CD4-positive, alpha-beta memory T cell (primary cell): ENCODE measurements at regions of chr3 and their contacts with region 1.

Region 1: DNA sequence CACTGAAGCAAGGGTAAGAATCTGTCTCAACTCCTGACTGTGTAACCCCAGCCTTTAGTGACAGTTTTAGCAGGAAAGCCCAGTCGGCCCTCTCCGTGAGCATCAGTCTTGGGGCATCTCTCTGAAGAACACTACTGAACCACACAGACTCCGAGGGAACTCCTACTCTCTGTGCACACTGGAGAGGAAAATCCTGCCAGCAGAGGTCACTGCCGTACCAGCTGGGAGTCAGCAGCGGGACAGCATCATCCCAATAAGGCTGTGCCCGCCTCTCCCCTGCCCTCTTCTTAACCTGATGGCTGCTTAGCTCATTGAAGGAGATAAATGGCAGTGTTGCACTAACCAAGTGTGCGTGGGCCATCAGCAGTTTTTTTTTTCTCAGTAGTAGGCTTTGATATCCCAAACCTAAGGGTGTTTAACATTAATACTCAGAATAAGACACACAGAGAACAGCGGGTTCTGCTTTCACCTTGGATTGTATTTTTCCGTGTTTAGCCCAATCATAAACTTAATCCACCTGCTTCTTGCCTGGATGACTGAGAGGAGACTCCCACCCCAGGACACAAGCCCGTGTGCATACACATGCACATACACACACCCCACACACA is 26.6 kb upstream of the RASA2 start:
- DNase-seq: peak; percentile 80 to 87 (median 82)
- H3K4me3 ChIP-seq: no peak overlapping the region
- H3K4me3 Mint-ChIP-seq: no peak overlapping the region
- H3K27ac ChIP-seq: no peak overlapping the region
- H3K27ac Mint-ChIP-seq: peak overlapping the region in 2 of 7 donors; percentile 6 to 18
- H3K4me1 ChIP-seq: peaks cover under 1% of the 10 kb centered on the region
- H3K4me1 Mint-ChIP-seq: peaks cover under 1 to 13% (median 6%) of the 10 kb centered on the region in 4 donors
- H3K27me3 ChIP-seq: no peaks in the 10 kb centered on the region
- H3K27me3 Mint-ChIP-seq: no peaks in the 10 kb centered on the region

Region 2: DNA sequence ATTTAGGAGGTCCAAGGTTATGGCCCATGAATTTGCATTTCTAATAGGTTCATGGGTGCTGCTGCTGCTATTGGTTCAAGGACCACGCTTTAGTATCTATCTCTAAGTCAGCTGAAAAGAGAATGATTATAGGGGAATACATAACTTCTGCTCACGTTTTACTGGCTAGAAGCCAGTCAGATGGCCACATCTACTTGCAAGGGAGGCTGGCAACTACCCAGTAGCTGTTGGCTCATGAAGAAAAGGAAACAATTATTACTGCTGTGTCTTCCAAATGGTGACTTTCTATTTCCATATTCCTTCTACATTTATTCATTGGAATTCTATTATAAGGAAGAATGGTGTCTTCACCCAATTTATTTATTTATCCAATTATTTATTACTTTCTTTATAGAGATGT is 464.3 kb before region 1 on chr3:
- CTCF ChIA-PET with region 1: no interaction called
- POLR2A ChIA-PET with region 1: no interaction called
- intact Hi-C with region 1: no loop called
- DNase-seq: no peak
- H3K4me3 ChIP-seq: no peak overlapping the region
- H3K4me3 Mint-ChIP-seq: no peak overlapping the region
- H3K27ac ChIP-seq: no peak overlapping the region
- H3K27ac Mint-ChIP-seq: no peak overlapping the region
- H3K4me1 ChIP-seq: no peaks in the 10 kb centered on the region
- H3K4me1 Mint-ChIP-seq: peaks cover 0 to 2% (median 0%) of the 10 kb centered on the region in 4 donors
- H3K27me3 ChIP-seq: no peaks in the 10 kb centered on the region
- H3K27me3 Mint-ChIP-seq: peaks cover 4 to 12% of the 10 kb centered on the region in 2 donors

Region 3: DNA sequence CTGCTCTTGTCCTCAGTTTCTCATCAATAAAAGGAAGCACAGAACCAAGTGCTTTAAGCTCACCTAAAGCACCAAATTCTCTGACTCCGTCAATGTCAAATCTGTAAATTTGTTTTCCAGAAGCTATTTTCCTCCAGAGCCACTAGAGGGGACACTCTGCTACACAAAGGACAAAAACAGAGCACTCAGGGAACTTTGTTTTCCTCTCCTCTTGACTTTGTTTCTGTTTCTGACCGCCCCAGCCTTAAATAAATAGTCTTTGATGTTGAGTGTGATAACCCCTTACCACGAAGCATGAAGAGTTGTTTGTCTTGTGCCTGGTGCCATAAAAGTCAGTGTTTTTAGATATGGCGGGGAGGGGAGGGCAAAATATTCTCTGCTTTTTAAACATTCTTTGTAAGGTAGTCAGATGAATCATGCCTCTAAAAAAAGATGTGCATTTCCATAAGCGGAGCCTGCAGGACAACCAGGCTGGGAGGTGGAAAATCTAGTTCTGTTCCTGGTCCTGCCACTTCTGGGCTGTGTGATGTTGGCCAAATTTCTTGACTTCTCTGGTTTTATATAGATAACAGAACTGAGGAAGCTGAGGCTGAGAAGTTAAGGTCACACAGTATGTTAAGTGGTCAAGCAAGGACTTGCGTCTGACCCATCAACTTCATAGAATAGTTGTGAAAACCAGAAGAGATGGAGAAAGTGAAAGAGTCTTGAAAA is 99.2 kb before region 1 on chr3:
- CTCF ChIA-PET with region 1: interaction called, 147 read pairs
- POLR2A ChIA-PET with region 1: no interaction called
- intact Hi-C with region 1: no loop called
- DNase-seq: peak in 4 of 5 donors; percentile 46 to 60 (median 50)
- H3K4me3 ChIP-seq: no peak overlapping the region
- H3K4me3 Mint-ChIP-seq: peak overlapping the region in 6 of 8 donors; percentile 11 to 69 (median 50)
- H3K27ac ChIP-seq: no peak overlapping the region
- H3K27ac Mint-ChIP-seq: peak overlapping the region in 2 of 7 donors; percentile 7 to 39
- H3K4me1 ChIP-seq: peaks cover 10% of the 10 kb centered on the region
- H3K4me1 Mint-ChIP-seq: peaks cover 3 to 8% (median 7%) of the 10 kb centered on the region in 4 donors
- H3K27me3 ChIP-seq: no peaks in the 10 kb centered on the region
- H3K27me3 Mint-ChIP-seq: peaks cover 2 to 5% of the 10 kb centered on the region in 2 donors

Region 4: DNA sequence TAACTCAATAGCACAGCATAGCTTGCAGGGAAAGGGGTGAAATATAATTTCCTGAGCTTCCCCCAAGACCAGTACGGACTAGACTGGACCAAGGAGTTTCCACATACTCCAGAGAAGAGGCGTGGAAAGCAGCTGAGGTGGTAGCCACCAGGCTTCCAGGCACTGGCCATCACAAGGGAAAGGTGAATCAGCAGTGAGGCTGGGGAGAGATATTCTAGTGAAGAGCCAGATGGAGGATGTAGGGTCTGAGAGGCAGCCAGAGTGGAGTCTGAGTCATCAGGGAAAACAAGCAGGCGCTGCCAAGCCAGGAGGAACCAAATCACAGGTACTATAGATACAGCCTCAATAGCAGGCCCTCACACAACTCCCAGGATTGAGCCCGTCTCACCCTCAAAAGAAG is 17.0 kb after region 1 on chr3:
- CTCF ChIA-PET with region 1: interaction called, 49 read pairs
- POLR2A ChIA-PET with region 1: no interaction called
- intact Hi-C with region 1: loop called (anchors 1 kb)
- DNase-seq: no peak
- H3K4me3 ChIP-seq: no peak overlapping the region
- H3K4me3 Mint-ChIP-seq: no peak overlapping the region
- H3K27ac ChIP-seq: no peak overlapping the region
- H3K27ac Mint-ChIP-seq: peak overlapping the region in 1 of 7 donors; percentile 57
- H3K4me1 ChIP-seq: peaks cover 23% of the 10 kb centered on the region
- H3K4me1 Mint-ChIP-seq: peaks cover 13 to 38% (median 26%) of the 10 kb centered on the region in 4 donors
- H3K27me3 ChIP-seq: no peaks in the 10 kb centered on the region
- H3K27me3 Mint-ChIP-seq: no peaks in the 10 kb centered on the region

Region 5: DNA sequence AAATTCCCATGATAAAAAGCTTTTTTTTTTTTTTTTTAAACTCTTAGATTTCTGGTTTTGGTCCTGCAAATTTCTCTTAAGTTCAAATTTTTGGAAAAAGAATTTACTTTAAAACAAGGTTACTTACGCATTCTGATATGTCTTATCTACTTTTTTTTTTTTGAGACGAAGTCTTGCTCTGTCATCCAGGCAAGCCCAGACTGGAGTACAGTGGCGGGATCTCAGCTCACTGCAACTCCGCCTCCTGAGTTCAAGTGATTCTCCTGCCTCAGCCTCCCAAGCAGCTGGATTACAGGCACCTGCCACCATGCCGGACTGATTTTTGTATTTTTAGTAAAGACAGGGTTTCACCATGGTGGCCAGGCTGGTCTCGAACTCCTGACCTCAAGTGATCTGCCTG is 109.9 kb after region 1 on chr3:
- CTCF ChIA-PET with region 1: interaction called, 309 read pairs
- POLR2A ChIA-PET with region 1: no interaction called
- intact Hi-C with region 1: no loop called
- DNase-seq: no peak
- H3K4me3 ChIP-seq: no peak overlapping the region
- H3K4me3 Mint-ChIP-seq: no peak overlapping the region
- H3K27ac ChIP-seq: no peak overlapping the region
- H3K27ac Mint-ChIP-seq: peak overlapping the region in 2 of 7 donors; percentile 35 to 83
- H3K4me1 ChIP-seq: no peaks in the 10 kb centered on the region
- H3K4me1 Mint-ChIP-seq: peaks cover 0 to 11% (median 7%) of the 10 kb centered on the region in 4 donors
- H3K27me3 ChIP-seq: no peaks in the 10 kb centered on the region
- H3K27me3 Mint-ChIP-seq: no peaks in the 10 kb centered on the region

Region 6: GRCh38 chr3:141875374-141875892 is 415.2 kb after region 1 on chr3:
- CTCF ChIA-PET with region 1: interaction called, 5 read pairs
- POLR2A ChIA-PET with region 1: no interaction called
- intact Hi-C with region 1: loop called (anchors 1 kb)
- DNase-seq: peak; percentile 75 to 84 (median 78)
- H3K4me3 ChIP-seq: peak overlapping the region; percentile 82 to 86
- H3K4me3 Mint-ChIP-seq: peak overlapping the region; percentile 85 to 96 (median 92)
- H3K27ac ChIP-seq: peak overlapping the region; percentile 95
- H3K27ac Mint-ChIP-seq: peak overlapping the region; percentile 93 to 99 (median 95)
- H3K4me1 ChIP-seq: peaks cover 28% of the 10 kb centered on the region
- H3K4me1 Mint-ChIP-seq: peaks cover 19 to 39% (median 30%) of the 10 kb centered on the region in 4 donors
- H3K27me3 ChIP-seq: no peaks in the 10 kb centered on the region
- H3K27me3 Mint-ChIP-seq: peaks cover 0 to 1% of the 10 kb centered on the region in 2 donors

Region 7: DNA sequence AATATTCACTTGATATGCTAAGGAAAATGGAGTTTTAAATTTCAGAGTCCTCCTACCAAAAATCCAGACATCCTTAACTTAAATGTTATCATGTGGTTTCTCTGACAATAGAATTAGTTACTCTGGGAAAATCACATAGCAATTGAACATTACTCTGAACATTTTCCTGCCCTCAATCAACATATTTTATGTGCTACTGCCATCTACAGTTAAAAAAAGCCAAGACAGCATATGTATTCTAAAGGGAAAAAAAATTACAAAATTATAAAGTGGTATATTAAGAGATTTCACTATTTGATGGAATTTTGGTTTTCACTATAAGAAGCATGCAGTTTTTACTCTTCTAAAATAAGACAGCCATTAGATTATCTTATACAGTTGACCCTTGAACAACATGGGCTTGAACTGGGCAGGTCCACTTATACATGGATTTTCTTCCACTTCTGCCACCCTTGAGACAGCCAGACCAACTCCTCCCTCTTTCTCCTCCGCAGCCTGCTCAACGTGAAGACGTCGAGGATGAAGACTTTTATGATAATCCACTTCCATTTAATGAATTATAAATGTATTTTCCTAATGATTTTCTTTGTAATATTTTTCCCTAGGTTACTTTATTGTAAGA is 538.6 kb after region 1 on chr3:
- CTCF ChIA-PET with region 1: no interaction called
- POLR2A ChIA-PET with region 1: no interaction called
- intact Hi-C with region 1: loop called (anchors 1 kb)
- DNase-seq: peak in 1 of 5 donors; percentile 5
- H3K4me3 ChIP-seq: no peak overlapping the region
- H3K4me3 Mint-ChIP-seq: no peak overlapping the region
- H3K27ac ChIP-seq: no peak overlapping the region
- H3K27ac Mint-ChIP-seq: peak overlapping the region in 1 of 7 donors; percentile 25
- H3K4me1 ChIP-seq: no peaks in the 10 kb centered on the region
- H3K4me1 Mint-ChIP-seq: no peaks in the 10 kb centered on the region
- H3K27me3 ChIP-seq: no peaks in the 10 kb centered on the region
- H3K27me3 Mint-ChIP-seq: no peaks in the 10 kb centered on the region

Region 8: DNA sequence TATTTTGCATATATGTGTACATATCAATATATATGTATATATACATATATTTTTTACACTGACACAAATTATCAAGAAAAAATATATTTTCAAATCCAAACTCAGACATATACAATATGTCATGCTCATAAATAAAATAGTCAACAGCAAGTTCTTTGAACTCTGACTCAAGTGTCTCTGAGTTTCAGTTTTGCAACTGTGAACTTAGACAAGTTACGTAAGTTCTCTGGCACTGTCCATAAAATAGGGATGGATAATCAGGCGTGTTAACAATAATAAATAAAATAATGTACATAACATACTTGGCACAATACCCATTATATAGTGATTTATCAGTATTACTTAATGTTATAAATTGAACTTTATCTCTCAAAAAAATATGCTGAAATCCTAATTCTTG is 999.7 kb after region 1 on chr3:
- CTCF ChIA-PET with region 1: no interaction called
- POLR2A ChIA-PET with region 1: no interaction called
- intact Hi-C with region 1: no loop called
- DNase-seq: no peak
- H3K4me3 ChIP-seq: no peak overlapping the region
- H3K4me3 Mint-ChIP-seq: no peak overlapping the region
- H3K27ac ChIP-seq: no peak overlapping the region
- H3K27ac Mint-ChIP-seq: no peak overlapping the region
- H3K4me1 ChIP-seq: no peaks in the 10 kb centered on the region
- H3K4me1 Mint-ChIP-seq: peaks cover 0 to 2% (median under 1%) of the 10 kb centered on the region in 4 donors
- H3K27me3 ChIP-seq: no peaks in the 10 kb centered on the region
- H3K27me3 Mint-ChIP-seq: no peaks in the 10 kb centered on the region